AG04450 (cell line): ENCODE measurements at regions of chr7 and their contacts with region 1.

Region 1: DNA sequence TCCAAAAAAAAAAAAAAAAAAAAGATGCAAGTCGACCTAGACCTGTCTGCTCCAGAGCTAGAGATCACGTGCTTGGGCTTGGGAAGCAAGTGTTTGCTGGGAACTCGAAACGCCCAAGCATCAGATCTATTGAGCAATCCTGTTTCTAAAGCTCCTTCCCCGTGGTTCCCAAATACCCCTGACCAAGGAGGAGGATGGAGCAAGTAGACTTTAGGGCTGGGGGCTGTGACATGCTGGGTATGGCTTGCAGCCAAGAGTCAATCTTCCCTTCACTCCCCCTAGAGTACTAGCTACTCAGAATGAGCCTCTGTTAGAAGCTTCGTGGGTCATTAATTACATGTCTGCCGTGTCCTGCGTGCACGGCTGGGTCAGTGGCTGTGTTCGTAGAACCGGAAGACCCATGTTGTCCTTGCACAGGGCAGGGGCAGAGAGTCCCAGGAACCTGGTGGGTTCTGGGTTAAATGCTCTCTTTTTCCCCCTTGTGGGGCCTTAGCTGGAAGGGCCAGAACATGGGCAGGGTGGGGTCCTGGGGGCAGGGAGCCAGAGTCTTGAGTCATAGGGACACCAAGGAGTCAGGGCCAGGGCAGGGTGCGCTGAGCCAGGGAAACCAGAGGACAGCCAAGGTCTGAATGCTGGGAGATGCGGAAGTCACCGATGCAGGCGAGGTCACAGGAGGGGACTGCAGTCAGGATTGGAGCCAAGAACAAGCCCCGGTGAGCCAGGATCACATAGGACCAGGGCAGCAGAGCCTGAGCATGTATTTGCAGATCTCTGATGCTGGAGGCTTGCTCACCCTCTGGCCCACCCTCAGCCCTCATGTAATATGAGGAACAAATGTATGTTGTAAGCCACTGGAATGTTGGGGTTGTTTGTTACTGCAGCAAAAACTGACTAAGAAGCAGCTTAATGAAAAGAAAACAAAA is 34.6 kb upstream of the TPST1 start:
- DNase-seq: no peak
- H3K4me3 ChIP-seq: no peak overlapping the region
- H3K27ac ChIP-seq: no peak overlapping the region
- H3K27me3 ChIP-seq: no peaks in the 10 kb centered on the region
- CTCF ChIP-seq: no peak

Region 2: DNA sequence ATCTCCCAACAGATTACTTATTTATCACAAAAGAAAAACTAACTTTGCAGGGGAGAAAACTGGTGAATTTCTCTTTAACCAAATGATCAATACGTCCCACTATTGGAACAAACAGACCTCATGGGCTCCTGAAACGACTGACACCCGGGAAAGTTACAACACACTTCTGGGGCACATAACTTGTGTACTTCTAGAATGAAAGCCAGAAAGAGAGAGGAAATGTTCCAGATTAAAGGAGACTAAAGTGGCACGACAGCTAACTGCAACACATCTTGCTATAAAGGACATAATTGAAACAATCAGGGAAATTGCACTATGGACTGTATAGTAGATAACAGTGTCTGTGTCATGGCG is 19.9 kb after region 1 on chr7:
- CTCF ChIA-PET with region 1: no interaction called
- POLR2A ChIA-PET with region 1: no interaction called
- DNase-seq: no peak
- H3K4me3 ChIP-seq: no peak overlapping the region
- H3K27ac ChIP-seq: no peak overlapping the region
- H3K27me3 ChIP-seq: no peaks in the 10 kb centered on the region
- CTCF ChIP-seq: no peak

Region 3: GRCh38 chr7:66204822-66205740 is 34.5 kb after region 1 on chr7 and contains the start of gene TPST1:
- CTCF ChIA-PET with region 1: no interaction called
- POLR2A ChIA-PET with region 1: interaction called, 10 read pairs
- DNase-seq: peak; percentile 59
- H3K4me3 ChIP-seq: peak within 1 kb of the TSS; percentile 96
- H3K27ac ChIP-seq: no peak within 1 kb of the TSS
- H3K27me3 ChIP-seq: no peaks in the 10 kb centered on the region
- CTCF ChIP-seq: peak; percentile 34; the same call in 1 of the 2 replicates
- polyA plus RNA-seq, gene TPST1: 119 and 129 TPM in 2 replicates

Region 4: DNA sequence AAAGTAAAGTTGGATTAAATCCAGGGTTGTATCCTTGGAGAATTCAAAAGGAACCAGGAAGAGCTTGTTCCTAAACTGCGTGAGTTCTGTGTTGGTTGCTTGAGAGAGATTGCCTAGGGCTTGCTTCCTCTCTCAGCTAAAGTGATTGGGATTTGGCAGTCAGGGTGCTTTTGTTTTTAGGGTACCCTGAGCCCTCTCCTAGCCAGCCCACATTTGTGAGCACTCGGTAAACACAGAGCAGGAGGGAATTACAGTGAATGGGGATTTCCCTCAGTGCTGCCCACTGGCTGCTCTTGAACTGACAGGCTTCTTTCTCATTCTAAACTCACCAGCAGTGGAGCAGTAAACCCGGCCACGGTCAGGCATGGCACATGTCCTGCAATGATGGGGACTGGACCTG is 181.5 kb after region 1 on chr7:
- CTCF ChIA-PET with region 1: no interaction called
- POLR2A ChIA-PET with region 1: no interaction called
- DNase-seq: no peak
- H3K4me3 ChIP-seq: no peak overlapping the region
- H3K27ac ChIP-seq: peak overlapping the region; percentile 3
- H3K27me3 ChIP-seq: no peaks in the 10 kb centered on the region
- CTCF ChIP-seq: peak; percentile 13; the same call in 1 of the 2 replicates